Heart left ventricle (tissue), 16 donors: ENCODE measurements at regions of chr9 and their contacts with region 1.

Region 1: DNA sequence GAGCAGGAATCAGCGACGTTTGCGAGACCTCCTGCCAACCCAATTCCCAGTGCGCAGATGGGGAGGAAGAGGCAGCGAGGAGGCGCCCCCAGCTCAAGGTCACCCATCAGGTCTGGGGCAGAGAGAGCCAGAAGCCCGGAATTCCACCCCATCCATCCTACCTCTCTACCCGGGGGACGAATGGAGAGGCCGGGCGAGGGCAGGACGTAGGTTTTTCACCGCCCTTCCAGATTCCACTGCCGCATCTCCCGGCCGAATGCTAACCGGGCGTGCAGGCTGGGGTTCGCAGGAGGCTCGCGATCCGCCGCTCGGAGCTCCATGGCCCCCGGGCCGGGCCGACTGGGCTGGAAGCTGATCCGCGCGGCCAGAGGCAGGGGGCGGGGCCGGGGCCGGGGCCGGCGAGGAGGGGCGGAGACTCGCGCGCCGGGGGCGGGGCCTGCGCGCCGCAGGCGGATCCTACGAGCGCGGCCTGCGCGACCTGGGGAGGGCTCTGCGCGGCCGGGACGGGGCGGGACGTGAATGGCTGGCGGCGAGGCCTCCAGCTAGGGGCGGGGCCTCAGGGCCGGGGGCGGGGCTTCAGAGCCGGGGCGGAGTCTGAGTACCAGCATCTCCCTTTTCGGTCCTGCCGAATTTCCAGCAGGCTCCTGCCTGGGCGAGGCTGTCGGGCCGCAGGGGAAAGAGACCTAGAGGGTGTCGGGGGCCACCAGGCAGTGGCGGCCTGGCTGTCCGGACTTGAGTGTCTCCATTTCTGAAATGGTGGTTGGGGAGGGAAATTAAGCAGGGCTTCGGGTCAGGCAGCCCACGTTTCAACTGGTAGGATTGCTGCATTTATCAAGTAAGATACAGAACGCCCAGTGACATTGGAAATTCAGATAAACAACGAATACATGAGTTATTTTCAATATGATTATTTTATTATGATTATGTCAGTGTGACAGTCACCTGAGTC is at the start of gene ST6GALNAC4:
- DNase-seq: peak; percentile 94 to 98 (median 95)
- ATAC-seq: peak; percentile 87 to 96 (median 92)
- H3K4me3 ChIP-seq: peak within 1 kb of the TSS; percentile 38 to 88 (median 76)
- H3K27ac ChIP-seq: peak within 1 kb of the TSS; percentile 5 to 81 (median 58)
- H3K4me1 ChIP-seq: peaks cover 7 to 60% (median 42%) of the 10 kb centered on the region in 12 donors
- H3K27me3 ChIP-seq: no peaks in the 10 kb centered on the region
- CTCF ChIP-seq: no peak
- POLR2A ChIP-seq: peak in 1 of 2 donors; percentile 45
- total RNA-seq, gene ST6GALNAC4: 28.3 to 66.1 (median 42.6) TPM

Region 2: DNA sequence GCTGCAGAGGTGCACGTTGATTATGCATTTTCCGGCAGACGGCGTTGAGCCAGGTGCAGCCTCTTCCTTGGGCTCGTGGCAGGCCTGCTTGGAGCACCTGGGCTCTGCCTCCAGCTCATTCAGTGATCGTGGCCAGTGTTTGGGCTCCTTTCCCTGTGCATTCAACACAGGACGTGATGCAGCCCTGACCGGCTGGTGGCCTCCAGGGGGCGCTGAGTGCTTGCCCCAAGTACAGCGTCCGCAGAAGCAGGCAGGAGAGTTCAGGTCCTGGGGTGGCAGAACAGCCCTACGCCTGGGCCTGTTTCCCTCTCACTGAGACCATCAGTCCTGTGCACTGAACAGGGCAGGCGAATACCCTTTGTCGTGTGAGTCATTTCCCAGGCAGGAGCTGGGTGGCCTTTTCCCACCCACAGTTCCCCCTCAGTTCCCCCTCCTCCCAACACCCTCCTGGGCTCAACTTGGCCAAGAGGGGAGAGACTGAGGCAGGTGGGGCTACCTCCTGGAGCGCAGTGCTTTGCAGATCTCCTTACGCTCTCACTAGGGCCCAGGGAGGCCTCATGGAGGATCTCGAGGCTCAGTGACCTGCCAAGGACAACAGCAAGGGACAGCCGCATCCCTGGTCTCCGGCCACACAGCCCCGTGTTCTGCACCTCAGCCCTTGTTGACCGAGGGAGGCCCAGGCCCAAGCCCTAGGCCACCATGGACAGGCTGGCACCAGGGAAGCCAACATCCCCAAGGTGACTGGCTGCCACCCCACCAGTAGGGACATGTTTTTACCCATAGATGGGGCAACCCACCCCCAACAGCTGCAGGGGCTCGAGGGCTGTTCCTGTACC is 412.8 kb before region 1 on chr9:
- intact Hi-C with region 1: loop called (anchors 5 to 10 kb)
- DNase-seq: peak; percentile 82 to 91 (median 88)
- ATAC-seq: peak; percentile 75 to 86 (median 79)
- H3K4me3 ChIP-seq: no peak overlapping the region
- H3K27ac ChIP-seq: peak overlapping the region in 3 of 12 donors; percentile 17 to 24 (median 19)
- H3K4me1 ChIP-seq: peaks cover 0 to 3% (median under 1%) of the 10 kb centered on the region in 12 donors
- H3K27me3 ChIP-seq: no peaks in the 10 kb centered on the region
- CTCF ChIP-seq: peak; percentile 84 to 94 (median 90)
- POLR2A ChIP-seq: peak in 1 of 2 donors; percentile 15

Region 3: GRCh38 chr9:127586537-127586936 is 330.4 kb before region 1 on chr9:
- intact Hi-C with region 1: loop called (anchors 1 to 5 kb)
- DNase-seq: peak; percentile 81 to 90 (median 83)
- ATAC-seq: peak; percentile 82 to 94 (median 92)
- H3K4me3 ChIP-seq: no peak overlapping the region
- H3K27ac ChIP-seq: no peak overlapping the region
- H3K4me1 ChIP-seq: peaks cover 0 to 6% (median 0%) of the 10 kb centered on the region in 12 donors
- H3K27me3 ChIP-seq: no peaks in the 10 kb centered on the region
- CTCF ChIP-seq: peak; percentile 80 to 91 (median 86)
- POLR2A ChIP-seq: no peak

Region 4: DNA sequence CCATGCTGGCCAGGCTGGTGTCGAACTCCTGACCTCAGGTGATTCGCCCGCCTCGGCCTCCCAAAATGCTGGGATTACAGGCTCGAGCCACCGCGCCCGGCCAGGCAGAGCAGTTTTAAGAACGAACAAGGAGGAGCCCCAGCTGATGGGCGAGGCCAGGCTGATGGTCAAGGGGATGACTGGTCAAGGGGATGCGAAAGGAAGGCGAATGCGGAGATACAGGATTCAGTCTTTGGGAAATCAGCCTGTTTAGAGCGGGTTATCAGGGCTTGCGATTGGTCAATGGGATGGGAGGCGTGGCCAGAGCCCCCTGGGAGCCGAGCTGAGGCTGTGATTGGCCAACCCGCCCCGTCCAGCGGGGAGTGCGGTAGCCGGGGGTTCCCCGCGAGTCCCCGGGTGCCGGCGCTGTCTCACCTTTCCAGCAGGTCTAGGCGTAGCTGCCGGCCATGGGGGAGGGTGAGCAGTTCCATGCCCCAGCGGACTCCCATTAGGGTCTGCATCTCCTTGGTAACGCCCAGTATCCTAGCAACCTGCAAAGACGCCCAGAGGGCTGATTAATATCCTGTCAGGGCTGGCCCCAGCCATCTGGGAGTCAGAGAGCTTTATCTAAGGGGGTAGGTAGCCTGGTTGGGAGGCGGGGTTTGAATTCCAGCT is 174.4 kb before region 1 on chr9:
- intact Hi-C with region 1: loop called in 3 of 10 experiments (anchors 2 to 5 kb)
- DNase-seq: no peak
- ATAC-seq: peak in 2 of 4 donors; percentile 12 to 37
- H3K4me3 ChIP-seq: peak overlapping the region in 11 of 12 donors; percentile 4 to 55 (median 44)
- H3K27ac ChIP-seq: peak overlapping the region in 1 of 12 donors; percentile 60
- H3K4me1 ChIP-seq: peaks cover 0 to 32% (median 10%) of the 10 kb centered on the region in 12 donors
- H3K27me3 ChIP-seq: no peaks in the 10 kb centered on the region
- CTCF ChIP-seq: no peak
- POLR2A ChIP-seq: no peak

Region 5: DNA sequence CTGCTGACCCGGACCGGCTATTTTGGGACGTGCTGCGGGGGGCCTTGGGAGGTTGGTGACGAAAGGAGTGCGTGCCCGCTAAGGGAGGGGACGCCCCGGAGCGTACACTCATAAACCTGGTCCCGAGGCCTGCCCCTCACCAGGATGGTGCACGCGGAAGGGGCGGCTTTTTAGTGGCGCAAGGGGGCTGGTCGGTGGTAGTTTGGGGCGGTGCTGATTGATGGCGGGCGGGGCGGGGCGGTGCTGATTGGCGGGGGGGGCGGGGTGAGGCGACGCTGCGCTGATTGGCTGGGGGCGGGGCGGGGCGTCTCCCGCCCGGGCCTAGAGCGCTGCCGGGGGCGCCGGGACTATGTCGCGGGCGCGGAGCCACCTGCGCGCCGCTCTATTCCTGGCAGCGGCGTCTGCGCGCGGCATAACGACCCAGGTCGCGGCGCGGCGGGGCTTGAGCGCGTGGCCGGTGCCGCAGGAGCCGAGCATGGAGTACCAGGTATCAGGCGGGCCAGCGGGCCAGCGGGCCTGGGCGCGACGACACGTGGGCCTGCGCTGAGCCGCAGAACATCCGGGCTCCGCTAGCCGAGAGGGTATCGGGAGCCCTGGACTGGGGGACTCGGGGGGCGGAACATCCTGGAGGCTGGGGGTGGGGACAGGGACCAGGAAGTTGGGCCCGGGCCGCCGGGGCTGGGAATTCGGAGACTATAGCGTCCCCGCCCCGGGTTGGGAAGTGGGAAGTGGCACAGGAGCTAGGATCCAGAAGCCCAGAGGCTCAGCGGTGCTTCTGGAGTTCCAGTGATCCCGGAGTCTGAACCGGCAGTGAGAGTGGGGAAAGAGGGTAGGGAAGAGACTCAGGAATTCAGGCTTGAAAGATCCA is 114.1 kb before region 1 on chr9 and contains the start of gene FPGS:
- intact Hi-C with region 1: loop called in 1 of 10 experiments (anchors 5 kb)
- DNase-seq: peak; percentile 92 to 95 (median 93)
- ATAC-seq: peak; percentile 80 to 94 (median 92)
- H3K4me3 ChIP-seq: peak within 1 kb of the TSS; percentile 51 to 87 (median 76)
- H3K27ac ChIP-seq: peak within 1 kb of the TSS; percentile 86 to 97 (median 95)
- H3K4me1 ChIP-seq: peaks cover 5 to 32% (median 19%) of the 10 kb centered on the region in 12 donors
- H3K27me3 ChIP-seq: no peaks in the 10 kb centered on the region
- CTCF ChIP-seq: no peak
- POLR2A ChIP-seq: peak in 1 of 2 donors; percentile 53
- total RNA-seq, gene FPGS: 39.9 to 55.1 (median 41.5) TPM

Region 6: DNA sequence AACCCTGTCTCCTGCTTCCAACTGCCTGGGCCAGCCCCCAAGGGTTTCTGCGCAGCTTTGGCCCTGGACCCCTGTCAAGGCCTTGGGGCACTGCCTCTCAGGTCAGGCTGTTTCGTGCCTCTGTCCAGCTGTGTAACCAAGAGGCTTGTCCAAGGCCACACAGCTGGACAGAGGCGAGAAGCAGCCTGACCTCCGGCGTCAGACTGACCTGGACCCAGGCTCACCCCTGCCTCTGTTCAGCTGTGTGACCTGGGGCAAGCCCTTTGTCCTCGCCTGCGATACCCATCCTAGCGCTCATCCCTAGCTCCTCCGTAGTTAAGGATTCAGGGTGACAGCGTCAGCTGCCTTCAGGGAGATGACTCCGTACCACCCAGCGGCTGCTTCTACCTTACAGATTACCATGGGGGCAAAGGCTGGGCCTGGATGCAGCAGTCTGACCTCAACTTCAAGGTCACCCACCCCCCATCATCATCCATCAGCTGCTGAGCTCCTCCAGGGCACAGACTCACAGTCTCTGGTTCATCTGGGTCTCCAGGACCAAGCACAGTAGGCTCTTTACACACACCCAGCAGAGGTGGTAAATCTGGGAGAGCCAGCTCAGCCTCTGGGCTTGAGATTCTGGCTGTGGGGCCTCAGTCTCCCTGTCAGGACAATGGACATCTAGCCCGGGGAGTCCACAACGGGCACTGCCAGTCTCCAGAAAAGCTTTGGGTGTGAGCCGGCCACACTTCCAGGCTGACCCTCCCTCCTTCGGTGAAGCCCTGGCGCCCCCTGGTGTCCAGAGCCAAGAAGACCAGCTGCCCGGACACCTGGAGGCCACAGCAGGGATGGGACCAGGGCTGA is 47.4 kb before region 1 on chr9:
- intact Hi-C with region 1: loop called in 3 of 10 experiments (anchors 5 kb)
- DNase-seq: peak; percentile 90 to 96 (median 91)
- ATAC-seq: peak; percentile 64 to 80 (median 68)
- H3K4me3 ChIP-seq: no peak overlapping the region
- H3K27ac ChIP-seq: peak overlapping the region in 10 of 12 donors; percentile 27 to 88 (median 58)
- H3K4me1 ChIP-seq: peaks cover 0 to 55% (median 37%) of the 10 kb centered on the region in 12 donors
- H3K27me3 ChIP-seq: no peaks in the 10 kb centered on the region
- CTCF ChIP-seq: peak; percentile 85 to 94 (median 88)
- POLR2A ChIP-seq: no peak